ENCODE measurements at regions of chr1 and their contacts with region 1.

Region 1: DNA sequence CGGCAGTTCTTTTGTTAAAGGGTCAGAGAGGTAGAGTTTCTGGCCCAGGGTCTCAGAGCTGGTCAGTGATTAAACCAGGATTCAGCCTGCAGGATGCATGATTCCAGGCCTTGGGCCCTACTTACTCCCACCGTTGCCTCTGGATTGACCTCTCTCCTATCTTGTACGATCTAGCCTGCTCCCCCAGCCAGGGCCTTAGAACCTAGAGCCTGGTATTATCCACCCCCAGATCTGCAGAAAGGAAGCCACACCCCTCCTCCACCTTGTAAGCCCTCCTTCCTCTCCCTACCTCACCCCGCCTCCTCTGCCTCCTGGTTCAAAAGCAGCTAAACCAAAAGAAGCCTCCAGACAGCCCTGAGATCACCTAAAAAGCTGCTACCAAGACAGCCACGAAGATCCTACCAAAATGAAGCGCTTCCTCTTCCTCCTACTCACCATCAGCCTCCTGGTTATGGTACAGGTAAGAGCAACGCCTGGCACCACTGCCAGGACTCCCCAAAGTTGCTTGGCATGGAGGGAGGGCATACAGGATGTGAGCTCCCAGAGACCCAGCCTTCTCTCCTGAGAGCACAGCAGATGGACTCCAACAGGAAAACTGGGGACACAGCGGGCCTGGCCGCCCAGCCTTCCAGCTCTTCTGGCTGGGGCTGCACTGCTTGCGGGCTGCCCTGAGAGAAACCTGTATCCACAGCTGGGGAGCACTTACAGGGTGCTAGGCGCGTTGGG is at the start of gene CD52:
- DNase-seq: no peak
- ATAC-seq: no peak
- total RNA-seq, gene CD52: 13.2 TPM

Region 2: GRCh38 chr1:25517476-25518394 is 800.0 kb before region 1 on chr1:
- intact Hi-C with region 1: no loop called
- DNase-seq: no peak
- ATAC-seq: no peak

Region 3: GRCh38 chr1:26279456-26280332 is 38.1 kb before region 1 on chr1 and contains the start of gene SH3BGRL3:
- intact Hi-C with region 1: loop called (anchors 5 kb)
- DNase-seq: peak; percentile 92
- ATAC-seq: peak; percentile 92
- total RNA-seq, gene SH3BGRL3: 106 TPM